CD4-positive, alpha-beta T cell (primary cell): ENCODE measurements at regions of chr22 and their contacts with region 1.

Region 1: DNA sequence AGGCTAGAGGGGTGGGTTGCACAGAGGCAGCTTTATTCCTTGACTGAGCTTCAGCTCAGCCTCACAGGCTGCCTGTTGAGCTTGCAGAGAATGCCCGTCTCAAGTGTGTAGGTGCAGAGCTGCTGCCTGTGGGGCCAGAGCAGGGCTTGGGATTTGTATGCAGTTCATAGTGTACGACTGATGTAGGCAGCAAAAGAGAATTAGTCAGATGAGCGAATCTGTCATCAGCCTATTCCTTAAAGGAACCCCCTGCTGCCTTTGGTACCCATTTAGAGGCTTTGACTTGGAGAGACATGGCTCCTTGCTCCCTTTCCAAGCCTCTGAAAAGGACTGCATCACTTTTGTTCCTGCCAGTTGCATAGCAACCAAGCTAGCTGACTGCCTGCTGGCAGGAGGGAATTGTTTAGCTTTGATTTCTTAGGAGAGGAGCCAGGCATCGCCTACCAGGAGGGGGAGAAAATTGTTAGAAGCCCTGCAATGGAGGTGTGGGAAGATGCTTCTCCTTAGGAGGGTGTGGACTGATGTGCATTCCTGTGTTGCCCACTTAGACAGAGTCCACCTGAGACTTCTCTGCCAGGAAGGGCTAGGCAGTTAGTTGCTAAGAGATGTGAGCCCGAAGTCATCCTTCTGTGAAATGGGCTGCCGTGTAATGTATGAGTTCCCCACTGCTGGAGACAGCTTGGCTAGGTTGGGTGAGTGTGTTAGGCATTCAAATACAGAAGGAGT is 10.9 kb downstream of the ACO2 start:
- DNase-seq: no peak
- ATAC-seq: no peak
- H3K4me3 ChIP-seq: no peak overlapping the region
- H3K4me3 Mint-ChIP-seq: no peak overlapping the region
- H3K27ac ChIP-seq: no peak overlapping the region
- H3K27ac Mint-ChIP-seq: no peak overlapping the region
- H3K4me1 ChIP-seq: peaks cover 16% of the 10 kb centered on the region
- H3K4me1 Mint-ChIP-seq: peaks cover 44% of the 10 kb centered on the region
- H3K27me3 ChIP-seq: no peaks in the 10 kb centered on the region
- H3K27me3 Mint-ChIP-seq: no peaks in the 10 kb centered on the region
- CTCF ChIP-seq: no peak

Region 2: DNA sequence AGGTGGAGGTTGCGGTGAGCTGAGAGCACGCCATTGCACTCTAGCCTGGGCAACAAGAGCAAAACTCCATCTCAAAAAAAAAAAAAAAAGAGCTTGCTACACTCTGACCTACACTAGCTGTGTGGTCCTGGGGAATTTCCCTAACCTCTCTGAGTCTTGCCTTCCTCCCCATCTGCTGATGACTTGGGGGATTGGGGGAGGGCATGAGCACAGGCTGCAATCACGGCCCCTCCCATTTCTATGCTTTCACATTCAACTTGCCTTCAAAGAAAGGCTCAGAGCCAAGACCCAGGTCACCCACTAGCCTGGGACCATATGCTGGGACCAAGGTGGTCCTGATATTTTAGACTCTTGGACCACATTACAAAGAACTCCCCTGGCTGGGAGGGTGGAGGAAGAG is 137.8 kb before region 1 on chr22:
- CTCF ChIA-PET with region 1: no interaction called
- POLR2A ChIA-PET with region 1: no interaction called
- intact Hi-C with region 1: no loop called
- DNase-seq: peak in 1 of 14 experiments; percentile 20
- ATAC-seq: no peak
- H3K4me3 ChIP-seq: no peak overlapping the region
- H3K4me3 Mint-ChIP-seq: no peak overlapping the region
- H3K27ac ChIP-seq: no peak overlapping the region
- H3K27ac Mint-ChIP-seq: no peak overlapping the region
- H3K4me1 ChIP-seq: peaks cover 5% of the 10 kb centered on the region
- H3K4me1 Mint-ChIP-seq: no peaks in the 10 kb centered on the region
- H3K27me3 ChIP-seq: no peaks in the 10 kb centered on the region
- H3K27me3 Mint-ChIP-seq: no peaks in the 10 kb centered on the region
- CTCF ChIP-seq: no peak

Region 3: GRCh38 chr22:41526837-41527799 is 47.3 kb after region 1 on chr22:
- CTCF ChIA-PET with region 1: no interaction called
- POLR2A ChIA-PET with region 1: no interaction called
- intact Hi-C with region 1: loop called in 1 of 2 experiments (anchors 5 kb)
- DNase-seq: peak; percentile 57 to 82 (median 68)
- ATAC-seq: peak; percentile 65
- H3K4me3 ChIP-seq: no peak overlapping the region
- H3K4me3 Mint-ChIP-seq: no peak overlapping the region
- H3K27ac ChIP-seq: peak overlapping the region in 1 of 2 donors; percentile 60
- H3K27ac Mint-ChIP-seq: peak overlapping the region; percentile 47
- H3K4me1 ChIP-seq: peaks cover 28% of the 10 kb centered on the region
- H3K4me1 Mint-ChIP-seq: peaks cover 15% of the 10 kb centered on the region
- H3K27me3 ChIP-seq: no peaks in the 10 kb centered on the region
- H3K27me3 Mint-ChIP-seq: no peaks in the 10 kb centered on the region
- CTCF ChIP-seq: peak; percentile 80